ENCODE measurements at regions of chrX and their contacts with region 1.

Region 1: GRCh38 chrX:129925305-129926092 is 19.5 kb downstream of the UTP14A start:
- DNase-seq: peak; percentile 35 to 81 (median 70)
- ATAC-seq: peak; percentile 75
- H3K4me3 ChIP-seq: no peak overlapping the region
- H3K4me3 Mint-ChIP-seq: no peak overlapping the region
- H3K27ac ChIP-seq: no peak overlapping the region
- H3K27ac Mint-ChIP-seq: no peak overlapping the region
- H3K4me1 ChIP-seq: no peaks in the 10 kb centered on the region
- H3K4me1 Mint-ChIP-seq: peaks cover 4% of the 10 kb centered on the region
- H3K27me3 ChIP-seq: no peaks in the 10 kb centered on the region
- H3K27me3 Mint-ChIP-seq: no peaks in the 10 kb centered on the region
- CTCF ChIP-seq: peak; percentile 51

Region 2: GRCh38 chrX:129606918-129607317 is 318.6 kb before region 1 on chrX:
- CTCF ChIA-PET with region 1: interaction called, 3 read pairs
- POLR2A ChIA-PET with region 1: no interaction called
- intact Hi-C with region 1: loop called in 1 of 2 experiments (anchors 5 kb)
- DNase-seq: peak; percentile 9 to 72 (median 60)
- ATAC-seq: peak; percentile 63
- H3K4me3 ChIP-seq: no peak overlapping the region
- H3K4me3 Mint-ChIP-seq: no peak overlapping the region
- H3K27ac ChIP-seq: no peak overlapping the region
- H3K27ac Mint-ChIP-seq: no peak overlapping the region
- H3K4me1 ChIP-seq: peaks cover 15% of the 10 kb centered on the region
- H3K4me1 Mint-ChIP-seq: peaks cover 19% of the 10 kb centered on the region
- H3K27me3 ChIP-seq: no peaks in the 10 kb centered on the region
- H3K27me3 Mint-ChIP-seq: no peaks in the 10 kb centered on the region
- CTCF ChIP-seq: peak; percentile 54

Region 3: DNA sequence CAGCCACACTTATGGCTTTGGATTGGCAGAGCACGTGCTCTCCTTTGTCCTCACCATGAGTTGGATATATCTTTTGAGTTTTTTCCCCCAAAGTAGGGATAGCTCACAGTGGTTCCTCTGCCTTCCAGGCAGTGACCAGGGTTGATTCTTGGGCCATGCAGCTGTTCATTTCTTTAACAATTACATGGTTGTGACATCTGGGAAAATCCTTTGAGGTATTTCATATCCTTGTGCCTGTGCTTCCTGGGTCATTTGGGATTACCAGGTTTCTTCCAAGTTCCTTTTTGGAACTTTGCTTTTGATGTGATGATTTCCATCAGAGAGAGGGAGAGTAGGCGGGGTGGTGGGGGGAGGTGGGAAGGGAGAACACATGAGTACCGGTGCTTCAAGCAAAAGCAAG is 72.5 kb after region 1 on chrX:
- CTCF ChIA-PET with region 1: interaction called, 18 read pairs
- POLR2A ChIA-PET with region 1: no interaction called
- intact Hi-C with region 1: no loop called
- DNase-seq: no peak
- ATAC-seq: no peak
- H3K4me3 ChIP-seq: no peak overlapping the region
- H3K4me3 Mint-ChIP-seq: no peak overlapping the region
- H3K27ac ChIP-seq: no peak overlapping the region
- H3K27ac Mint-ChIP-seq: no peak overlapping the region
- H3K4me1 ChIP-seq: no peaks in the 10 kb centered on the region
- H3K4me1 Mint-ChIP-seq: peaks cover 6% of the 10 kb centered on the region
- H3K27me3 ChIP-seq: no peaks in the 10 kb centered on the region
- H3K27me3 Mint-ChIP-seq: no peaks in the 10 kb centered on the region
- CTCF ChIP-seq: no peak

Region 4: DNA sequence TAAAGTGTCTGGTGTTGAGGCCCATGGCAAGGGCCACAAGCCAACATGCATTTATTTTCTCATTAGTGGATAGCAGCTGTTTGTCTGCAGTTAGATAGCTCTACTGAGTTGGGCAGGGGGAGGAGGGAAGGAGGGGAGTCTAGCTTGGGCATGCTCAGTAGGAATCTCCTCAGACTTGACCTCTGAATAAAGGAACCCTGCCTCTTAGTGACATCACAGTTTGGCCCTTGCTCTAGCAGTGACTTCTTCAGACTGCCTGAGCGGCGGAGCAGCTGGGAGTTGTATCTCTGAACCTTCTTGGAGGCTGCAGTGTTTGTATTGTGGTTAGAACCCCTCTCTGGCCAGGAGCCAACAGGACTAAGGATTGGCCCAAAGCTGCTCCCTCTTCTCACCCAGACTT is 114.3 kb after region 1 on chrX:
- CTCF ChIA-PET with region 1: interaction called, 12 read pairs
- POLR2A ChIA-PET with region 1: no interaction called
- intact Hi-C with region 1: no loop called
- DNase-seq: no peak
- ATAC-seq: no peak
- H3K4me3 ChIP-seq: no peak overlapping the region
- H3K4me3 Mint-ChIP-seq: no peak overlapping the region
- H3K27ac ChIP-seq: no peak overlapping the region
- H3K27ac Mint-ChIP-seq: no peak overlapping the region
- H3K4me1 ChIP-seq: no peaks in the 10 kb centered on the region
- H3K4me1 Mint-ChIP-seq: no peaks in the 10 kb centered on the region
- H3K27me3 ChIP-seq: no peaks in the 10 kb centered on the region
- H3K27me3 Mint-ChIP-seq: no peaks in the 10 kb centered on the region
- CTCF ChIP-seq: no peak

Region 5: DNA sequence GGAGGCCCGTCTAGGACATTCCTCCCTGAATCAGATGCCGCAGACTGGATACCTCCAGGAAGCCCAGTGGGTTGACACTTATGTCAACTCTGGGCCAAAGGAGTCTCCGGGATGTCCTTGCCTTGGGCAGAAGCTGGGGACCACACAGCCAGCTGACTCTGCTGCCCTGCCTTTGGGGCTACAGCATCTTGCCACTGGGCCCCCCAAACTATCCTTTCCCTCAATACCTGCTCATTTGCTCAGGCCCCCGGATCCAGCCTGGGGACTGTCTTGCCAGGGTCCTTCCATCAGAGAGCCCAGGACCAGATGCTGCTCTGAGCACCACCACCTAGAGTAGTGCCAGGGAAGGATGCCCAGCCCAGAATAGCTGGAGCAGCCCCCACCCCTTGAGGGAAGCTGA is 265.3 kb after region 1 on chrX:
- CTCF ChIA-PET with region 1: interaction called, 3 read pairs
- POLR2A ChIA-PET with region 1: no interaction called
- intact Hi-C with region 1: loop called (anchors 1 to 5 kb)
- DNase-seq: no peak
- ATAC-seq: no peak
- H3K4me3 ChIP-seq: no peak overlapping the region
- H3K4me3 Mint-ChIP-seq: no peak overlapping the region
- H3K27ac ChIP-seq: no peak overlapping the region
- H3K27ac Mint-ChIP-seq: no peak overlapping the region
- H3K4me1 ChIP-seq: no peaks in the 10 kb centered on the region
- H3K4me1 Mint-ChIP-seq: peaks cover 2% of the 10 kb centered on the region
- H3K27me3 ChIP-seq: no peaks in the 10 kb centered on the region
- H3K27me3 Mint-ChIP-seq: no peaks in the 10 kb centered on the region
- CTCF ChIP-seq: no peak

Measured in CD8-positive, alpha-beta T cell (primary cell).